Activated CD8-positive, alpha-beta T cell treated with anti-CD3 and anti-CD28 coated beads, Interleukin-2, amount 10 ng/mL, durations not matched to agents 7 days and 5 days (primary cell): ENCODE measurements at regions of chr16 and their contacts with region 1.

Region 1: GRCh38 chr16:77171745-77172635 is 19.0 kb upstream of the MON1B start:
- DNase-seq: peak; percentile 56
- ATAC-seq: peak; percentile 51
- H3K4me3 Mint-ChIP-seq: no peak overlapping the region
- H3K27ac Mint-ChIP-seq: no peak overlapping the region
- H3K4me1 Mint-ChIP-seq: no peaks in the 10 kb centered on the region
- H3K27me3 Mint-ChIP-seq: peaks cover 21% of the 10 kb centered on the region

Region 2: GRCh38 chr16:75787440-75787839 is 1384.5 kb before region 1 on chr16:
- CTCF ChIA-PET with region 1: interaction called, 10 read pairs
- POLR2A ChIA-PET with region 1: no interaction called
- DNase-seq: no peak
- ATAC-seq: no peak
- H3K4me3 Mint-ChIP-seq: no peak overlapping the region
- H3K27ac Mint-ChIP-seq: no peak overlapping the region
- H3K4me1 Mint-ChIP-seq: no peaks in the 10 kb centered on the region
- H3K27me3 Mint-ChIP-seq: peaks cover 16% of the 10 kb centered on the region

Region 3: GRCh38 chr16:77183137-77183536 is 11.1 kb after region 1 on chr16:
- CTCF ChIA-PET with region 1: interaction called, 18 read pairs
- POLR2A ChIA-PET with region 1: no interaction called
- DNase-seq: no peak
- ATAC-seq: no peak
- H3K4me3 Mint-ChIP-seq: no peak overlapping the region
- H3K27ac Mint-ChIP-seq: no peak overlapping the region
- H3K4me1 Mint-ChIP-seq: no peaks in the 10 kb centered on the region
- H3K27me3 Mint-ChIP-seq: peaks cover 13% of the 10 kb centered on the region

Region 4: GRCh38 chr16:77190478-77191258 is 18.7 kb after region 1 on chr16 and contains the start of gene MON1B:
- CTCF ChIA-PET with region 1: interaction called, 11 read pairs
- POLR2A ChIA-PET with region 1: no interaction called
- DNase-seq: peak; percentile 97
- ATAC-seq: peak; percentile 98
- H3K4me3 Mint-ChIP-seq: peak within 1 kb of the TSS; percentile 86
- H3K27ac Mint-ChIP-seq: peak within 1 kb of the TSS; percentile 100
- H3K4me1 Mint-ChIP-seq: peaks cover 38% of the 10 kb centered on the region
- H3K27me3 Mint-ChIP-seq: no peaks in the 10 kb centered on the region
- total RNA-seq, gene MON1B: 66.3 to 67.0 TPM

Region 5: DNA sequence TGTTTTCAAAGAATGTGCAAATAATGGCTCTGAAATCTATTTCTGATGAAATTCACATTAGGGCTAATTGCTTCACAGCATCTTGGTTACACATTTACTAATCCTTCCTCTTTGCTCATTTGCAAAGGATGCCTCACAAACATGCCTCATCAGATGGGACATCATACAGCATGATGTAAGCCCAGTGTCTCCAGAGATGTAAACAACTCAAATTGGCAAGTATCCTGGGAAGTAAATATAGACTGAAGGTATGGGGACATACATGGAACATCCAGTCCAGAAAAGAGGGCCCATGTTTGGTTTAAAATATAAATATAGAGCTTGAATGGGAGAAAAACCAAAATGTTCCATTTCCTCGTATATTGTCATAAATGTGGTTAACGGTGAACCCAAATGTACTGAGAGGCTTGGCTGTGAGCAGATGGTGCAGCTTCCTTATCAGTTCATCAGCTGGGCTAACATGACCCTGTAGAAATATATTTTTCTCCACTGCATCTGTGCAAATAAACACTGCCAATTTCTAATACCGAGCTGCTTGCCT is 407.4 kb after region 1 on chr16:
- CTCF ChIA-PET with region 1: no interaction called
- POLR2A ChIA-PET with region 1: no interaction called
- DNase-seq: no peak
- ATAC-seq: no peak
- H3K4me3 Mint-ChIP-seq: no peak overlapping the region
- H3K27ac Mint-ChIP-seq: no peak overlapping the region
- H3K4me1 Mint-ChIP-seq: no peaks in the 10 kb centered on the region
- H3K27me3 Mint-ChIP-seq: peaks cover 4% of the 10 kb centered on the region